Left ventricle myocardium inferior (tissue), 1 donor: ENCODE measurements at regions of chr21 and their contacts with region 1.

Region 1: GRCh38 chr21:26769613-26770188 is 75.5 kb downstream of the ADAMTS1 start:
- DNase-seq: no peak
- H3K4me3 ChIP-seq: no peak overlapping the region
- H3K27ac ChIP-seq: no peak overlapping the region
- H3K4me1 ChIP-seq: no peaks in the 10 kb centered on the region
- H3K27me3 ChIP-seq: no peaks in the 10 kb centered on the region
- CTCF ChIP-seq: peak; percentile 78

Region 2: DNA sequence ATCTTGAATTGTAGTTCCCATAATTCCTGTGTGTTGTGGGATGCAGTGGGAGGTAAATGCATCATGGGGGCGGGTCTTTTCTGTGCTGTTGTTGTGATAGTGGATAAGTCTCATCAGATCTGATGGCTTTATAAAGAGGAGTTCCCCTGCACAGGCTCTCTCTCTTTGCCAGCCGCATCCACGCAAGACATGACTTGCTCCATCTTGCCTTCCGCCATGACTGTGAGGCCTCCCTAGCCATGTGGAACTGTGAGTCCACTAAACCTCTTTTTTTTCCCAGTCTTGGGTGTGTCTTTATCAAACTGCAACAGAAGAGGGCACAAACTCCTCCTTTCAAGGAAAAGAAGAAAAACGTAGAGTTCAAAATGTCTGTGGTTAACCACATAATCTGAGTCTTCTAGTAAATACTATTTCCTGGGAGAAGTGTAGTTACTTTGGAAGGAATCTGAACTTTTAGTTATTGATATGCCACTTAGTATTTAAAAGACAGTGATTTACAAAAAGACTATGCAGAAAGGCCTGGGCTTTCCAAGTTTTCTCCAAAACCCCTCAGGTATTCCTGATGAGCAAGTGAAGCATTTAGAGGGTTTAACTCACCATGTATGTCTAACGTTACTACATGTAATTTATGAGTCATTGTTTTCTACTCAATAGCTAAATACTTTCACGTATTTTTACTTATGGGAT is 65.5 kb after region 1 on chr21:
- intact Hi-C with region 1: loop called (anchors 5 kb)
- DNase-seq: no peak
- H3K4me3 ChIP-seq: no peak overlapping the region
- H3K27ac ChIP-seq: peak overlapping the region; percentile 4
- H3K4me1 ChIP-seq: peaks cover 44% of the 10 kb centered on the region
- H3K27me3 ChIP-seq: no peaks in the 10 kb centered on the region
- CTCF ChIP-seq: no peak

Region 3: DNA sequence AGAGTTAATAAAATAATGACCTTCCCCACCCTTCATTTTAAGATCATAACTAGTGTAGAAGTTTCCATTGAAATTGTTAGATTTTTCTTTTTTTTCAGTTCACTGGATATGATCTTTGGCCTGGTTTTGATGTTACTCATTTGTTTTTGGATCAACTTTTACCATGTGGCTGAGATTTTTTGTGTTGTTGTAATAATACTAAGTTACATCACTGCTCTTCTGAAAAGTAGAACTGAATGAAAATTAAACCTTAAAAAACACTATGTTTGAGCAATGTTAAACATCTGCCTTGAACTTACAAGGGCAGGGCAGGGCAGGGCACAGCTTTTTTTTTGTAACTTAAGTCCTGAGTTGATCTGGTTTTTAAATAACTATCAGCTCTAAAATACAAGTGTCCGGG is 402.0 kb after region 1 on chr21:
- intact Hi-C with region 1: no loop called
- DNase-seq: no peak
- H3K4me3 ChIP-seq: no peak overlapping the region
- H3K27ac ChIP-seq: peak overlapping the region; percentile 64
- H3K4me1 ChIP-seq: peaks cover 4% of the 10 kb centered on the region
- H3K27me3 ChIP-seq: no peaks in the 10 kb centered on the region
- CTCF ChIP-seq: no peak

Region 4: GRCh38 chr21:27693376-27693775 is 923.7 kb after region 1 on chr21:
- intact Hi-C with region 1: loop called (anchors 10 kb)
- DNase-seq: no peak
- H3K4me3 ChIP-seq: no peak overlapping the region
- H3K27ac ChIP-seq: no peak overlapping the region
- H3K4me1 ChIP-seq: no peaks in the 10 kb centered on the region
- H3K27me3 ChIP-seq: no peaks in the 10 kb centered on the region
- CTCF ChIP-seq: no peak